Left colon (tissue), 2 donors: ENCODE measurements at regions of chr16 and their contacts with region 1.

Region 1: GRCh38 chr16:56866943-56867830 is 2.2 kb downstream of the SLC12A3 start:
- DNase-seq: peak in 1 of 2 donors; percentile 41
- ATAC-seq: peak; percentile 51

Region 2: GRCh38 chr16:56911771-56912571 is 44.8 kb after region 1 on chr16:
- intact Hi-C with region 1: no loop called
- DNase-seq: peak; percentile 45 to 68
- ATAC-seq: peak; percentile 10

Region 3: GRCh38 chr16:56944954-56945839 is 78.0 kb after region 1 on chr16:
- intact Hi-C with region 1: loop called (anchors 5 to 10 kb)
- DNase-seq: no peak
- ATAC-seq: no peak

Region 4: GRCh38 chr16:56950881-56951771 is 83.9 kb after region 1 on chr16:
- intact Hi-C with region 1: loop called (anchors 5 to 10 kb)
- DNase-seq: peak; percentile 36 to 61
- ATAC-seq: peak; percentile 80

Region 5: GRCh38 chr16:57045694-57046381 is 178.7 kb after region 1 on chr16:
- intact Hi-C with region 1: loop called in 1 of 2 experiments (anchors 10 kb)
- DNase-seq: peak; percentile 47 to 72
- ATAC-seq: peak; percentile 46